Right ventricle myocardium superior (tissue), 1 donor: ENCODE measurements at regions of chr7 and their contacts with region 1.

Region 1: DNA sequence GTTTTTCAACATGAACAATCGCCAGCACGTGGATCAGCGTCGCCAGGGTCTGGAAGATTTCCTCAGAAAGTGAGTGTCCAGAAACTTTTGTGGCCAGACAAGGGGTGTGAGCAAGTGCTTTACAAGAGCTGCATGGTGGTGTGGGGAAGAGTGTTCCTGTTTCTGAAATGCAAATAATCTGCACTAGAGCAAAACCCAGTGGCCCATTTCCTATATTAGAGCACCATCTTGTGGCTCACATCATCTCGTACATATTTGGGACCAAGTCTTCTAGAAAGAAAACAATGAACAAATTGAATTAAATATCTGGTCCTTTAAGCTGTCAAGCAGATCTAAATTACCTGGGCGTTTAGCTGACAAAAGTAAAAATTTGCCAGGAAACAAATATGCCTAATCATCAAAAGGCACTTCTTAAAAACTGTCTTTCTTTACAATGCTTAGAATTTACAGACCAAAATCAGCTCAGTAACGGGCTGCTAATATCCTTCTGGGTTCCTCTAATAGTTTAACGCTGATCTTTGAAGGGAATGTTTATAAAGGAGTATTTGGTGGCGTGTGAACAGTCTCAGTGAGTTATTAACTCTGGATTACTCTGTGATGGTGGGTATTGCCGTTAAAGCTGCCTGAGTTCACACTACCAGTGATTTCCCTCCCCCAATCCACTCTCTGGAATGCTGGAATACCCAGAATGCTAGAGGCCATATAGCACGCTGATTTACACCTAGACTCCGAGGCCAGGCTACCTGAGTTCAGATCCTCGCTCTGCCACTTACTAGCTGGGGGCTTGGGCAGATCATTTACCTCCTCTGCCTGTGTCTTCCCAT is 73.6 kb downstream of the SNX10 start:
- DNase-seq: peak; percentile 32
- ATAC-seq: peak; percentile 90

Region 2: DNA sequence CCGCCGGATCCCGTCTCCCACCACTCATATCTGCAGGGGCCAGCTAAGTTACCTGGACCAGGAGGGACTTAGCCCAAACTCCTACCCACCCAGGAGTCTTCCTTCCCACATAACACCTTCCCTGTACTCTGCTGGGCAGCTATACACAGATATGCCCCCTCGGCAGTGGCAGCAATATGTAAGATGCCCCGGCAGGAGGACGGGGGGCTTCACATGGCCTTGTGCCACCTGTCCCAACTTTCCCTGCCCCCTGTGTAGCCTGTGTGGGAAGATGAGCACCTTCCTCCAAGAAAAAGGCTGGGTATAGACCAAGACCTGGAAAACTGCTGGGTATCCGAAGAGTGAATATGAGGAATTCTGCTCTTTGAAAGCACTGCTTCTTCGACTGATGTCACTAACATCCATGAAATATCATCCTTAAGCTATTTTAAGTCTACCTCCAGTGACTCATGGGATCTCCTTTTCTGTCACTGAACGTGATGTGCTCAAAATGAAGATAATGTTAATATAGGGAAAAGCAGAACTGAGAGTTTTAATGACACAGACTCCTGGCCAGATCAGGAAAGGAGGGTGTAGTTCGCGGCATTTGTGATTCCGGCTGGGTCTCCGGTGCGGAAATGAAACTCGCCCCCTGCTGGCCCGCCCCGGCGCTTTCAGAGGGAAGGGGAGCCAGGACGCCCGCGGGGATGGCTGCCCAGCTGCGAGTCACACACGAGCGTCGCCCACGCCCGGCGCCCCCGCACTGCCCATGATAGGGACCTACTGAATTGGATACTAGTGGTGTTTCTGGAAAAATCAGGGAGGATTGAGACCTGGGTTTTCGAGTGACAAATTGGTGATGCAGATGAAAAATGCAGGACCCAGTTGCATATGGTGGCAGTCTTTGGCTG is 470.1 kb before region 1 on chr7:
- intact Hi-C with region 1: loop called (anchors 2 kb)
- DNase-seq: peak; percentile 79
- ATAC-seq: peak; percentile 89

Region 3: GRCh38 chr7:26090927-26091519 is 274.3 kb before region 1 on chr7:
- intact Hi-C with region 1: loop called (anchors 5 kb)
- DNase-seq: no peak
- ATAC-seq: peak; percentile 67

Region 4: GRCh38 chr7:26667500-26668133 is 302.3 kb after region 1 on chr7:
- intact Hi-C with region 1: loop called (anchors 2 kb)
- DNase-seq: no peak
- ATAC-seq: peak; percentile 78

Region 5: DNA sequence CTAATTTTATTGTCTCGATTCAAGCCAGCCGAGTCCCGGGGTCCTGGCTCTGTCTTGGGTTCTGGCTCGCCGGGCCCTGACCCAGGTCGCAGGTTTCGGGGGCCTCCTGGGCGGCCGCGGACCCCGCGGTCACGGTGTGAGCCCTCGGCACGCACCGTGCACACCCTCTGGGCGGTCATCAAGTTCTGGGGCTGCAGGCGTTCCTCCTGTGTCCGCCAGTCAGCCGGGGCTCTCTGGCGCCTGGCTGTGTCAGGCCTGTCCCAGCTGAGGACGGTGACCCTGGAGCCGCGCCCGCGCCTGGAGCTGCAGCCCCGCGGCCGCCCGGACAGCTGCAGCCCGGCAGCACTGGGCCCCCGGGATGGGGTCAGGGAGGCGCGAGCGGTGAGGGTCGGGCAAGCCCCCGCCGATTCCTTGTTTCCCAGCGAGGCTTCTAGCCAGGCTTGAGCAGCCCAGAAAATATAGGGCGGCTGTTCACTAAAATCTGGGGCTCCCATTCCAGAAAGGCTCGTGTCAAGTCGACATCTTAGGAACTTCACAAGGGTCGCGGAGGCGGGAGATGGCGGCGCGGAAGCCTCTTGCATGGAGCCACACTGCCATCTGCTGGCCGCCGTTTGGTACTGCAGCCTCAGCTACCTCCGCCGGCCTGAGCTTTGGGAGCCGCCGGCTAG is 795.4 kb after region 1 on chr7:
- intact Hi-C with region 1: loop called (anchors 5 kb)
- DNase-seq: peak; percentile 92
- ATAC-seq: peak; percentile 91